Lower lobe of right lung (tissue), 2 donors: ENCODE measurements at regions of chr10 and their contacts with region 1.

Region 1: DNA sequence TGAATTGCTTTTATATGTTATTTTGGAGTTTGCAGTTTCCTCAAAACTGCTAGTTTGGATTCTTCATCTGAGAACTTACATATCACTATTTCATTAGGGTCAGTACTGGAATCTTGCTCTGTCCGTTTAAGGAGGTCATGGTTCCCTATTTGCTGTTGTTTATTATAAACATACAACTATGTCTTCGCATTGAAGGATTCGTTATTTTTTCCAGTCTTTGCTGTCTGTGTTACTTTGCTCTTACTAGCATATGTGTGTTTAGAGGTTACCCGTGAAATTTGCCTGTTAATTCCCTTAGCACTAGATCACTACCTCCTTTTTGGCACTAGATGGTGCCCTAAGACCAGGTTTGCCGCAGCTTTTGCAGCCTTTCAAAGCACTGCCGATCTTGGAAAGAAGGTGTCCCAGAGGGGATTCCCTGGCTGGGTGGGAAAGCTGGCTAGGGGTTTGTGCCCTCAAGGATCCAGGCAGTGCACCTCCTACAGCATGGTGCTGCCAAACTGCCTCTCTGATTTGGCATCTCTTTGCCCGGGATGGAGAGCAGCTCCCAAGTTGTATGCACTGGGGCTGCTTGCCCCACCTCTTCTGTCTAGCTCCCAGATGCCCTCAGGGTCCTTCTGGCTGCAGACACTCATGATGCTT is 103.1 kb upstream of the APBB1IP start:
- DNase-seq: peak; percentile 52
- ATAC-seq: peak; percentile 87 to 92
- H3K4me3 ChIP-seq: peak overlapping the region; percentile 33
- H3K27ac ChIP-seq: no peak overlapping the region
- H3K4me1 ChIP-seq: no peaks in the 10 kb centered on the region
- H3K27me3 ChIP-seq: no peaks in the 10 kb centered on the region
- CTCF ChIP-seq: peak; percentile 74

Region 2: GRCh38 chr10:25436431-25436830 is 898.6 kb before region 1 on chr10:
- intact Hi-C with region 1: no loop called
- DNase-seq: no peak
- ATAC-seq: no peak
- H3K4me3 ChIP-seq: no peak overlapping the region
- H3K27ac ChIP-seq: no peak overlapping the region
- H3K4me1 ChIP-seq: no peaks in the 10 kb centered on the region
- H3K27me3 ChIP-seq: no peaks in the 10 kb centered on the region
- CTCF ChIP-seq: no peak

Region 3: DNA sequence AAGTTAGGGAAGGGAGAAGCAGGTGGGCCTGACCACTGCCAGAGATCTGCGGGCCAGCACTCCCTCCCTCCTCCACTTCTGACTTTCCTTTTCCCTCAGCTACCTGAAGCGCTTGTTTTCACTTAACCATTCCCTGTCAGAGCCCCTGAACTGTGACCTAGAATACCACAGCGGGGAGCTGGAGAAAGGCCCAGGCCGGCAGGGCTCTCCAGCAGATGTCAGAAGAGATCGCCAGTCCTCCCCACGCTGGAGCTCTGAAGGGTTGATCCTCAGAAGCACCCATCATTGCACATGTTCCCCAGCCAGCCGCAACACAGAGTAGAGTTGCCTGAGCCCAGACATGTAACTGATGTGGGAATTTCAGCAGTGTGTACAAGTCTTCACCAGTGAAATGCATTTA is 162.9 kb before region 1 on chr10:
- intact Hi-C with region 1: no loop called
- DNase-seq: no peak
- ATAC-seq: no peak
- H3K4me3 ChIP-seq: no peak overlapping the region
- H3K27ac ChIP-seq: no peak overlapping the region
- H3K4me1 ChIP-seq: no peaks in the 10 kb centered on the region
- H3K27me3 ChIP-seq: no peaks in the 10 kb centered on the region
- CTCF ChIP-seq: no peak

Region 4: DNA sequence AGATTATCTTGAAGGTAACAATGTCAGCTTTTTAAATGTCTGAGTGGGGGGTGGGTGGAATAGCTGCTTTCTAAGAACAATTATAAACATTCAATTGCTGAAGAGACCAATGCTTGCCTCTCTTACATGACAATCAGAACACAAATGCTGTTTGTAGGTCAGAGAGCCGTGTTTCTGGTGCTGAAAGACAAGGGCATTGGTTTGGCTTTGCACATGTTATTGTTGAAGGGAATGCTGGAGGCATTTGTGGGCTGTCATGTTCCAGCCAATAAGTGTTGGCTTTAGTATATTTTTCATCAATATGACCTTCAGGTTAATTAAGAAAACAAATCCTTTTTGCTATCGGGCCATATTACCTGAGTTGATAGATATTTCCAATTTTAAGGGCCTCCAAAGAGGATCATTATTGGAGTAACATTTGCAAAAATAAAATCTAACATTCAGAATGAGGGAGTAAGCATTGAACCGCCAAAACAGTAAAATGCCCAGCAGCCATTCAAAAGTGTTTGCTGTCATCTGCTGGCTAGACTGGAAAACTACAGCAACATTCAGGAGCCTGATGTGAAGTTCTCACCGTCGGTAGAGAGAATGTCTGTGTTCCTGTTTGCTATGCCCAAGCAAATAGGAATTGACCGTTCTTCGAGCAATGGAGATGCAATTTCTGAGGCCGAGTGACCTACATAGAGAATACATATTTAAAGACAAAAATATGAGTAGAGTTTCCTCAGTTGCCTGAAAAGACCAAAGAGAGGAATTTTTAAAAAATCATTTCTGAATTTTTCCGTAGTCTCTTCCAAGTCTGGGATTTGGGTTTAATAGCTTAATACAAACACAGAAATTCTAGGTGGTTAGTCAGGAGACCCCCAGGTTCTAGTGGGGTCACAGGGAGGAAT is 221.9 kb after region 1 on chr10:
- intact Hi-C with region 1: loop called (anchors 10 kb)
- DNase-seq: no peak
- ATAC-seq: peak; percentile 65 to 80
- H3K4me3 ChIP-seq: no peak overlapping the region
- H3K27ac ChIP-seq: no peak overlapping the region
- H3K4me1 ChIP-seq: peaks cover 22% of the 10 kb centered on the region
- H3K27me3 ChIP-seq: no peaks in the 10 kb centered on the region
- CTCF ChIP-seq: peak; percentile 76